Activated CD4-positive, alpha-beta memory T cell treated with anti-CD3 and anti-CD28 coated beads for 36 hours (primary cell): ENCODE measurements at regions of chr2 and their contacts with region 1.

Region 1: DNA sequence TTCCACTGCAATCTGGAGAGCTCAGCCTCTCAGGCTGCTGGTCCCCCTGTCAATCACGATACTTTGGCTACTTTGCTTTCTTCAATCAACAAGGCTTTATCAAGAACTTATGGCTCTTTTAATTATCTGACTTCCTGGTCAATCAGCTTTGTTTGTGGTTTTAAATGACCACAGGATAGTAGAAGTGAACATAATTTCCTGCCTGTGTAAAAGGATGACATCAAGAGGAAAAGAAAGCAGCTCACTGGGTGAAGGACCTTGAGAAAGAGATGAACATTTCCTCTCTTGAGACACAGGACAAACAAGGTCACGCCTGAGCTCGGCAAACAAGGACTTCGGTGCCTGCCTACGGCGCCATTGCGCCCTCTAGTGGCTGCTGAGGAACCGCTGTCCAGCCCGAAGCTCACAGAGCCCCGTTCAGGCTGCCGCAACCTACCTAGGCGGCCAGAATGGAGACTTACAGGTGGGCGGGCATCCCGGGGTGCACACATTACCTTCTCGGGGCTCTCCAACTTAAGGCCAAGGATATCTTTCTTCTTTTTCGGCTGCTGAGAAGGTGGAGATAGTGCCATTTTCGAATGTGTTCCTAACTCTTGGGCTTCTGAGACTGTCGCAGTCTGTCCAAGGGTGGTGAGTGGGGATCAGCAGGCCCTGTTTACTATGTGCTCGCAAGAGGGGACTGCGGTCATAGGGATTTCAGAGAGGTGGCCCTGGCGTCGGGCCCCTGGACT is 54.0 kb downstream of the IL1RL2 start:
- DNase-seq: peak; percentile 92
- H3K4me3 Mint-ChIP-seq: peak overlapping the region; percentile 5
- H3K27ac Mint-ChIP-seq: peak overlapping the region; percentile 78
- H3K4me1 Mint-ChIP-seq: peaks cover 38% of the 10 kb centered on the region
- H3K27me3 Mint-ChIP-seq: no peaks in the 10 kb centered on the region

Region 2: DNA sequence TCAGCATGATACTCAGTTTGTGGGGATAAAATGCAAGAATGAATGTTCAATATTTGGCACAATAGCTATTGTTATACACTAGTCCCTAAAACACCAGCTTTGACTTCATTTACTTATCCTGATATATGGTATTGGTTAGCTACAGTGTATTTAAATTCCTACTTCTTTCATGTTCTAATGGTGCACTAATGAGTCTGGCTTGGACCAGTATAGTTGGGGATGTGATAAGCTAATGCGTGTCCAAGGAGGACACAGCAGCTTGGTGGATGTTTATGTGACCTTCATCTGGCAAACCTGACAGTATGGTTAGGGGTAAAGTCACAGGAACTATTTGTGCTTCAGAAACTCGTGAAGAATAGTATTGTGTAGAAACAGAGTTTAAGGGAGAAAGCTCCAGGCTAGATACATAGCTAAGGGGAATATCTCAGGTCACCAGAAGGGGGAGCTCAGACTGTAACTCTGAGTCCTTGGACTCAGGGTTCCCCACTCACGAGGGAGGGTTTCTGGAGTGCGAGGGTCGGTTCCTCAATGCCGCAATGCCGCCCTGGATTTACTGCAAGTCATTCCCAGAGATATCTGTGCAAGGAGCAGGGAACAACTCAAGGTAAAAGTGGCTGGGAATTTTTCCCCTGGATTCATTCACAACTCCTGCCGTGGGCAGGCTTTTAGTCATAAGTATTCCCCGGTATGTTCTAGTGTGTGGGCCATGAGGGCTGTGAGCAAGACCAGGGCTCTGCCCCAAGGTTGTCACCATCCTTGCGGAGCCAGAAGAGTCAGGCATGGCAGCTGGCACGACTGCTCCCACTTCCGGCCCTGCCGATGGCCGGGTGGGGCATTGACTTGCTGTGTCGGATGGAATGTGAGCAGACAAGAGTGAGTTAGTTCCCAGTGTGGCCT is 234.6 kb before region 1 on chr2:
- CTCF ChIA-PET with region 1: interaction called, 148 read pairs
- POLR2A ChIA-PET with region 1: interaction called, 14 read pairs
- intact Hi-C with region 1: no loop called
- DNase-seq: peak; percentile 51
- H3K4me3 Mint-ChIP-seq: peak overlapping the region; percentile 33
- H3K27ac Mint-ChIP-seq: no peak overlapping the region
- H3K4me1 Mint-ChIP-seq: peaks cover 21% of the 10 kb centered on the region
- H3K27me3 Mint-ChIP-seq: peaks cover 1% of the 10 kb centered on the region

Region 3: DNA sequence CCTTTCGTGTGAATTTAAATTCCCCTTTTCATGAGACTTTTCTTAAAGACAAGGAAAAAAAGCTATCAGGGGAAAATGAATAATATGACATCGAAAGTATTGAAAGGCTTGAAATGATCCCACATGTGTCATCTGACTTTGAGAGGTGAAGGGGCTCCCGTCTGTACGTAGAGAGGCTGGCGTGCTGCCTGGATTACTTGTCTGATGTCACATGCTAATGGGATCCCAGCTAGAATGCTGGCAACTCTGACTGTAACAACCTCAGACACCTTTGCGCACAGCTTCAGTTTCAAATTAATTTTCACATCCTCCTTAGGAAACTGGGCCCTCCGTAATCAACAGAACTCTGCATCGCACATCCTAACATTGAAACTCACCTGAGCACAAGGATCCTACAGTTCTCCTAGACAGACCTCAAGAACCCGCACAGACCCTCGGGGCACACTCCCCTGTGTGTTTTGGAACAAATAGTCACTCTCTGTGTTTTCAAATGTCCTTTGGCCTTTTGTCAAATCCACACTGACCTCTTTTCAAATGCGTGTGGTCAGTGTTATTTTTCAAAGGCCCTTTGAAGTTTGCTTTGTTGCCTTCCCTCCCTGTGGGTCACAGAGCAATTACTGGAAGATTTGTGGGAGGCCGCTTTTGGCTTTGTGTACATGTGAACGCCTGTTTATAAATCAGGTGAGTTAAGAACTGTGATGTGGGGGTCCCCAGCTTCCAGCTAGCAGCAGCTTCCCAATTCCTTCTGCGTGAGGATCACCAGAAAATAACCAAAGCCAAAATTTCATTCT is 183.1 kb before region 1 on chr2:
- CTCF ChIA-PET with region 1: interaction called, 23 read pairs
- POLR2A ChIA-PET with region 1: interaction called, 8 read pairs
- intact Hi-C with region 1: no loop called
- DNase-seq: peak; percentile 73
- H3K4me3 Mint-ChIP-seq: no peak overlapping the region
- H3K27ac Mint-ChIP-seq: peak overlapping the region; percentile 31
- H3K4me1 Mint-ChIP-seq: peaks cover 33% of the 10 kb centered on the region
- H3K27me3 Mint-ChIP-seq: no peaks in the 10 kb centered on the region

Region 4: GRCh38 chr2:102126651-102127050 is 114.2 kb before region 1 on chr2:
- CTCF ChIA-PET with region 1: interaction called, 12 read pairs
- POLR2A ChIA-PET with region 1: no interaction called
- intact Hi-C with region 1: no loop called
- DNase-seq: no peak
- H3K4me3 Mint-ChIP-seq: no peak overlapping the region
- H3K27ac Mint-ChIP-seq: peak overlapping the region; percentile 90
- H3K4me1 Mint-ChIP-seq: peaks cover 38% of the 10 kb centered on the region
- H3K27me3 Mint-ChIP-seq: peaks cover 12% of the 10 kb centered on the region

Region 5: GRCh38 chr2:102187496-102188150 is 53.2 kb before region 1 on chr2:
- CTCF ChIA-PET with region 1: interaction called, 55 read pairs
- POLR2A ChIA-PET with region 1: no interaction called
- intact Hi-C with region 1: loop called (anchors 2 kb)
- DNase-seq: peak; percentile 72
- H3K4me3 Mint-ChIP-seq: peak overlapping the region; percentile 81
- H3K27ac Mint-ChIP-seq: peak overlapping the region; percentile 83
- H3K4me1 Mint-ChIP-seq: peaks cover 19% of the 10 kb centered on the region
- H3K27me3 Mint-ChIP-seq: peaks cover 13% of the 10 kb centered on the region

Region 6: GRCh38 chr2:102442967-102443828 is 202.4 kb after region 1 on chr2:
- CTCF ChIA-PET with region 1: interaction called, 56 read pairs
- POLR2A ChIA-PET with region 1: no interaction called
- intact Hi-C with region 1: no loop called
- DNase-seq: peak; percentile 63
- H3K4me3 Mint-ChIP-seq: peak overlapping the region; percentile 16
- H3K27ac Mint-ChIP-seq: peak overlapping the region; percentile 34
- H3K4me1 Mint-ChIP-seq: peaks cover 10% of the 10 kb centered on the region
- H3K27me3 Mint-ChIP-seq: no peaks in the 10 kb centered on the region